MCF 10A (cell line): ENCODE measurements at regions of chr2 and their contacts with region 1.

Region 1: GRCh38 chr2:240560480-240561326 is 546 bp downstream of the DUSP28 start:
- DNase-seq: peak; percentile 98
- H3K4me3 Mint-ChIP-seq: peak overlapping the region; percentile 80
- H3K27ac Mint-ChIP-seq: peak overlapping the region; percentile 74
- H3K4me1 Mint-ChIP-seq: peaks cover 41% of the 10 kb centered on the region
- H3K27me3 Mint-ChIP-seq: no peaks in the 10 kb centered on the region
- CTCF ChIP-seq: no peak

Region 2: DNA sequence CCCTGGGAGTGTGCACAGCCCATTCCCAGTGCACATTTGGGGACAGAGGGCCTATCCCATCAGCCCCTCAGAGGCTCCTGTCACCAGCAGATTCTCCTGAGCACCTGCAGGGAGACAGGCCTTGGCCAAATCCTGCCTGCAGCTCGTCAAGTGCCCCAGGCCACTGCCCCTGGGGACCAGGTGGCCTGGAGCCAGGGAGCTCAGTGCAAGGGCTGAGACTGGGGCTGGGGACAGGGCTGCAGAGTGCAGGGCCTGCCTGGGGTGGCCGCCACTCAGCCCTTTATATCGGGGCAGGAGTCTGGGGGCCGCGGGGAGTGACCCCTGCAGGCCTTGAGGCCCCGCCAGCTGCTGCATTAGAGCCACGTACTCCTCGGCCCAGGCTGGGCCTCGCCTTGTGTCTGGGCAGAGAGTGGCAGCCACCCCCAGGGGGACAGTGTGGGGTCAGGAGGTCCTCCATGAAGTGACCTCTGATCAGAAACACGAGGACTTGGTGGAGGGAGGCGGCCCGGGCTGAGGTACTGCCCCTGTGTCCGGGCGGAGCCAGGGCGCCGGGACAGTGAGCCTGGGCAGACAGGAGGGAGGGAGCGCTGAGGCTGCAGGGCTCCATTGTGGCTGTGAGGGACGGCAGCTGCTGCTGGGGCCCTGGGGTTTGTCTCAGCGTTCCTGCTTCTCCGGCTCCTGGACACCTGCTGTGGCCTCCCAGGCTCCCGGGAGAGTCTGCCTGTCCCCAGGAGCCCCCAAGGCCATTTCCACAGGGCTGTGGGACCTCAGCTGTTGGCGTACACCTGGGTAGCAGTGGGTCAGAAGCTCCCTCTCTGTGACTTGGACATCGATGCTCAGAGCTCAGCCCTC is 101.1 kb before region 1 on chr2:
- CTCF ChIA-PET with region 1: no interaction called
- POLR2A ChIA-PET with region 1: no interaction called
- intact Hi-C with region 1: no loop called
- DNase-seq: no peak
- H3K4me3 Mint-ChIP-seq: no peak overlapping the region
- H3K27ac Mint-ChIP-seq: no peak overlapping the region
- H3K4me1 Mint-ChIP-seq: no peaks in the 10 kb centered on the region
- H3K27me3 Mint-ChIP-seq: no peaks in the 10 kb centered on the region
- CTCF ChIP-seq: no peak

Region 3: DNA sequence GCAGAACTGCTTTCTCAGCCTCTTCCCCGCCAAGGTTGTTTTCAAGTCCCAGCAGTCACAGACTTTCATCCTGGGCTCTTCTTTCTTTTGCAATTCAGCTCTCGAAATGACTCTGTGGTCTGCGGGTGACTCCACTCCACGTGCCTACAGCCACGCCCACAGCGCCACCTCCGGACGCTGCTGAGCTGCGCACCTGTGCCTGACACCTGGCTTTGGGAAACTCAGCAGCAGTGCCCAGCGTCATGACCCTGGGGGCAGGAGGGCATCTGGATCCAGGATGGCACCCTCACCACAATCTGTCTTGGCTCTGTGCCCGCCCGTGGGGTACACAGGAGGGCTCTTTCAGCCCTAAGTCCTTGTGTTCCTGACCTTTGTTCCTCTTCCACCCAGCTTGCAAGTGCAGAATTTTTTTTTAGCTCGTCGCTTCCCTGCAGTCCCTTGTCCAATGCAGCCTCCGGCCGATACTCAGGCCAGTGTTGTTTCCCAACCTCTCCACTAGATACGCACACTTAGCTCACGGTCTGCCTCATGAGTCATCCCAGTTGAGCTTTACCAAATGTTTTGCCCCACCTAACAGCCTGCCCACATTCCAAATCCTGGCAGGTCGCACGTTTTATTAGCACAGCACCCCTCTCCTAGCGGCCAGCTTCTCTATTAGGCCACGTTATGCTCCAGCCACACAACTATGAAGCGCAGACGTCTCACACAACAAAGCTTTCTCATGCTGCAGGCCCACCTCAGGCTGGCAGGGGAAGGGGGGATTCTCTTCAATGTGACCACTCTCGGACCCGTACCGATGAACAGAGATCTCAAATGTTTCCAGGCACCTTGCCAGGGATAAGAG is 19.3 kb after region 1 on chr2:
- CTCF ChIA-PET with region 1: interaction called, 52 read pairs
- POLR2A ChIA-PET with region 1: interaction called, 275 read pairs
- intact Hi-C with region 1: no loop called
- DNase-seq: peak; percentile 98
- H3K4me3 Mint-ChIP-seq: peak overlapping the region; percentile 73
- H3K27ac Mint-ChIP-seq: peak overlapping the region; percentile 99
- H3K4me1 Mint-ChIP-seq: peaks cover 46% of the 10 kb centered on the region
- H3K27me3 Mint-ChIP-seq: no peaks in the 10 kb centered on the region
- CTCF ChIP-seq: no peak

Region 4: DNA sequence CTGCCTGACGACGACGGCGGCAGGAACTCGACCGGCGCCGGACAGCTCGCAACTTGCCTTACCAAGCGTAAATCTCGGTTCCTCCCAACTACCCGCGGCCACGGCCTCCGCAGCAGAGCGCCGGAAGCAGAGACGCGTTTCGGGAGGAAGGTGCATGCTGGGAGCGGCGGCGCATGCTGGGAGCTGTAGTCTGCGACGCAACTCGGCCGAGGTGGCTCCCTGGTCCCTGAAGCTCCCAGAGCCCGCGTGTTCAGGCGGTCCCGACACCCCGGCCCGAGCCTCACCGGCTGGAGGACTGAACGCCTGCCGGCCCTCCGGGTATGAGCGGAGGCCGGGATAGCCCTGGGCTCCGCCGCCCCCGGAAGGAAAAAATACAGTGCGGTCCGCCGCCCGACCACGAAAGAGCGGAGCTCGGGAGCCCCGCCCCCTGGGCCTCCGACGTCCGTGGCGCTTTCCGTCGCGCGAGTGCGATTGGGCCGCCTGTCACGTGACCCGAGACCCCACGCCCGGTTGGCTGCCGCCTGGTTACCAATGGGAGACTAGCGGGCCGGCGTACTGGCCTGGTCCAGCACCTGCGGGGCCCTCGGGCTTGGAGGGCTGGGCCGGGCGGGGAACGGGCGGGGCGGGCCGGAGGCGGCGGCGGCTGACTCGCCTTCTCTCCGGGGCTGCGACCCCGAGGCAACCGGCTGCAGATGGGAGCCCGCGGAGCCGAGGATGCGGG is 25.7 kb after region 1 on chr2 and contains the start of gene CAPN10:
- CTCF ChIA-PET with region 1: interaction called, 52 read pairs
- POLR2A ChIA-PET with region 1: interaction called, 275 read pairs
- intact Hi-C with region 1: no loop called
- DNase-seq: peak; percentile 96
- H3K4me3 Mint-ChIP-seq: peak within 1 kb of the TSS; percentile 87
- H3K27ac Mint-ChIP-seq: peak within 1 kb of the TSS; percentile 94
- H3K4me1 Mint-ChIP-seq: peaks cover 35% of the 10 kb centered on the region
- H3K27me3 Mint-ChIP-seq: no peaks in the 10 kb centered on the region
- CTCF ChIP-seq: no peak
- total RNA-seq, gene CAPN10: 27.6 and 35.2 TPM in 2 replicates